ENCODE measurements at regions of chr11 and their contacts with region 1.

Region 1: DNA sequence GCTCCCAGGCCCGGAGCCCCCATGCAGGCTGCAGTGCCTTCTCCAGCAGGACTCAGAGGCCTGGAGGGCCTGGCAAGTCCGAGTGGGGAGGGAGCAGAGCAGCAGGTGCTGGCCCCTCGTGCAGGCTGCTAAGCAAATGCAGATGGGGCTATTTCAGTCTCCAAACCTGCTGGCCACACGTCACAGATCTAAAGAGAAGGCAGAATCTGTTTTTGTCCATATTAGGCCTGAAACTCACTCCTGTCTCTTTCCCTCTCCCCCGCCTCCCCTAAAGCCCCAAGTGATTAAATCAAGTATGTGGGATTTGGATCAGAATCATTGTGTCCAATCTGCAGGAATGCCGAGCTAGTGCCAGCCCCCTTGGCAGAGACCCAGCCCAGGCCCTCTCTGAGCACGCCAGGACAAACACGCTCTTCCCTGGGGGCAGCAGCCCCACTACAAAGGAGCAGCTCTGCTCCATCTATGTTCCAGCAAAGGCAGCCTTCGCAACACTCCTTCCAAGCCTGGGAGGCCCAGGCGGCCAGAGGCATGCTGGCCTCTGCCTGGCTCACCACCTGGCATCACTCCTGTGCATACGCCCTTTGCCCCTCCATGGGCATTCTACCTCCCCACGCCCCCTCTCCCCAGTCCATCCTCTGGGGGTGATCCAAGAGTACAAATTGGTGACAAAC is 26.5 kb downstream of the RPL27A start:
- DNase-seq: peak; percentile 70 to 98
- H3K4me3 ChIP-seq: no peak overlapping the region
- H3K27ac ChIP-seq: peak overlapping the region; percentile 89 to 99
- H3K4me1 ChIP-seq: peaks cover 17 to 32% of the 10 kb centered on the region in 2 donors
- H3K27me3 ChIP-seq: no peaks in the 10 kb centered on the region
- CTCF ChIP-seq: no peak

Region 2: DNA sequence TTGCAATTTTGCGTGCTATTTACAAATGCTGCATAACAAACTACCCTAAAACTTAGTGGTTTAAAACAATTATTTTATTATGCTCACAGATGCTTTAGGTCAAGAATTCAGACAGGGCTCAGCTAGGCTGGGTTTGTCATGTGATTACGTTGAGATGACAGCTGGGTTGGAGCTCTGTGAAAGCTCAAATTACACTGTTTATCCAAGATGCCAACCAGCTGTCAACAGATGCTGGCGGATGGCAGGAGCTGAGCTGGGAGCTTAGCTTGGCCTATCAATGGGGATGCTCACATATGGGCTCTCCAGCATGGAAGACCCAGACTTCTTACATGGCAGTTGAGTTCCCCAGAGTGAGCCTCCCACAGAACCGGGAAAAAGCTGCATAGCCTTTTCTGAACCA is 177.8 kb before region 1 on chr11:
- intact Hi-C with region 1: no loop called
- DNase-seq: no peak
- H3K4me3 ChIP-seq: no peak overlapping the region
- H3K27ac ChIP-seq: no peak overlapping the region
- H3K4me1 ChIP-seq: no peaks in the 10 kb centered on the region
- H3K27me3 ChIP-seq: no peaks in the 10 kb centered on the region
- CTCF ChIP-seq: no peak

Region 3: GRCh38 chr11:8768625-8769333 is 59.6 kb after region 1 on chr11:
- intact Hi-C with region 1: loop called (anchors 2 kb)
- DNase-seq: peak; percentile 23 to 82
- H3K4me3 ChIP-seq: no peak overlapping the region
- H3K27ac ChIP-seq: peak overlapping the region; percentile 61 to 80
- H3K4me1 ChIP-seq: peaks cover 18 to 65% of the 10 kb centered on the region in 2 donors
- H3K27me3 ChIP-seq: no peaks in the 10 kb centered on the region
- CTCF ChIP-seq: peak in 2 of 3 experiments; percentile 39 to 54